CD4-positive, alpha-beta memory T cell (primary cell): ENCODE measurements at regions of chr1 and their contacts with region 1.

Region 1: GRCh38 chr1:89483010-89483756 is 41.4 kb upstream of the LRRC8B start:
- DNase-seq: peak; percentile 63 to 79 (median 68)
- H3K4me3 ChIP-seq: no peak overlapping the region
- H3K4me3 Mint-ChIP-seq: no peak overlapping the region
- H3K27ac ChIP-seq: no peak overlapping the region
- H3K27ac Mint-ChIP-seq: no peak overlapping the region
- H3K4me1 ChIP-seq: no peaks in the 10 kb centered on the region
- H3K4me1 Mint-ChIP-seq: peaks cover 0 to 10% (median 10%) of the 10 kb centered on the region in 4 donors
- H3K27me3 ChIP-seq: no peaks in the 10 kb centered on the region
- H3K27me3 Mint-ChIP-seq: no peaks in the 10 kb centered on the region

Region 2: GRCh38 chr1:89598450-89599331 is 115.5 kb after region 1 on chr1:
- CTCF ChIA-PET with region 1: interaction called, 7 read pairs
- POLR2A ChIA-PET with region 1: no interaction called
- intact Hi-C with region 1: loop called (anchors 1 kb)
- DNase-seq: peak in 4 of 5 donors; percentile 32 to 49 (median 38)
- H3K4me3 ChIP-seq: no peak overlapping the region
- H3K4me3 Mint-ChIP-seq: peak overlapping the region in 5 of 8 donors; percentile 37 to 79 (median 45)
- H3K27ac ChIP-seq: no peak overlapping the region
- H3K27ac Mint-ChIP-seq: peak overlapping the region; percentile 19 to 81 (median 71)
- H3K4me1 ChIP-seq: peaks cover 64% of the 10 kb centered on the region
- H3K4me1 Mint-ChIP-seq: peaks cover 55 to 82% (median 74%) of the 10 kb centered on the region in 4 donors
- H3K27me3 ChIP-seq: no peaks in the 10 kb centered on the region
- H3K27me3 Mint-ChIP-seq: no peaks in the 10 kb centered on the region

Region 3: GRCh38 chr1:89757532-89757931 is 274.3 kb after region 1 on chr1:
- CTCF ChIA-PET with region 1: interaction called, 115 read pairs
- POLR2A ChIA-PET with region 1: interaction called, 6 read pairs
- intact Hi-C with region 1: no loop called
- DNase-seq: peak; percentile 30 to 57 (median 42)
- H3K4me3 ChIP-seq: peak overlapping the region; percentile 31 to 38
- H3K4me3 Mint-ChIP-seq: peak overlapping the region; percentile 78 to 90 (median 85)
- H3K27ac ChIP-seq: peak overlapping the region; percentile 56
- H3K27ac Mint-ChIP-seq: peak overlapping the region; percentile 79 to 97 (median 92)
- H3K4me1 ChIP-seq: peaks cover 92% of the 10 kb centered on the region
- H3K4me1 Mint-ChIP-seq: peaks cover 64 to 92% (median 78%) of the 10 kb centered on the region in 4 donors
- H3K27me3 ChIP-seq: no peaks in the 10 kb centered on the region
- H3K27me3 Mint-ChIP-seq: no peaks in the 10 kb centered on the region